ENCODE measurements at regions of chr12 and their contacts with region 1.

Region 1: DNA sequence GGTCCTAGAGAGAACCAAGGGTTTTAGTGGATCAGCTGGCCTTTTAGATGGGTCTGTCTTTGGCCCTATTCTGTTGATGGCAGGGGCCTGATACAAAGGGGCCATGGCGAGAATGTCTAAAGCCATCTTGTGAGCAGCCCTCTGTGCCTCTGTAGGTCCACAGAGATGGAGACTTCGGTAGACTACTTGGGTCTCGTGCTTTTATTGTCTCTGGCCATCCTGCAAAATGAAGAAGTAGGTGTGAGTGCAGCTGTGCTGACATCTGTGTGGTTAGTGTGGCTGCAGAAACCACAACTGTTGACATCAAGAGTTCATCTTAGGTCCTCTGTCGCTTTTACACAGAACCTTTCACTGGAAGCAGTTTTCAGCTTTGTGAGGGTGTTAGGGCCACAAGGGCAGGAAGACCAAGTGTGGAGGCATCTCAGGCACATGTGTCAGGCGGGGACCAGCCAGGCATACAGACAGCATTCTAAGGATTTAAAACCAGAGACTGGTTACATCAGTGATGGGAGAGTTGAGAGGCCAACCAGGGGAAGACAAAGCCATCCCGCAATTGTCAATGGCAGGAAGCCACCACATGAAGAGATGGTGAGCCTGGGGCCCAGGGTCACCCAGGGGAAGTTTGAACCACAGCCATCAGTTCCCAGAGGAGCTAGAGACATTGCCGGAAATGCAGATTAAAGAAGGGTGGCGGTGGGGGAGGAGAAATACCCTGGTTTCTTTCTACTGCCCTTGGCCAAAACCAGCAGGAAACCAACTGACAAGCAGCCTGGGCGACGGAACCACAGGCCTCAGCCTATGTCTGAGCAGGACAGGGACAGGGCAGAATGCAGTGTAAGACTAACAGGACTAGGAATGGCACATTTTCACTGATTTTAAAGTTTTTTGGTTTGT is 13.0 kb upstream of the TPCN1 start:
- DNase-seq: peak; percentile 84
- H3K4me3 Mint-ChIP-seq: peak overlapping the region; percentile 41
- H3K27ac Mint-ChIP-seq: peak overlapping the region; percentile 90
- H3K4me1 Mint-ChIP-seq: peaks cover 61% of the 10 kb centered on the region
- H3K27me3 Mint-ChIP-seq: no peaks in the 10 kb centered on the region

Region 2: GRCh38 chr12:113135178-113136127 is 72.8 kb before region 1 on chr12 and contains the start of gene RASAL1:
- CTCF ChIA-PET with region 1: no interaction called
- POLR2A ChIA-PET with region 1: no interaction called
- DNase-seq: peak; percentile 66
- H3K4me3 Mint-ChIP-seq: peak within 1 kb of the TSS; percentile 54
- H3K27ac Mint-ChIP-seq: no peak within 1 kb of the TSS
- H3K4me1 Mint-ChIP-seq: peaks cover 14% of the 10 kb centered on the region
- H3K27me3 Mint-ChIP-seq: peaks cover 6% of the 10 kb centered on the region
- total RNA-seq, gene RASAL1: 0.10 to 0.35 TPM

Region 3: GRCh38 chr12:113145720-113146551 is 62.4 kb before region 1 on chr12:
- CTCF ChIA-PET with region 1: no interaction called
- POLR2A ChIA-PET with region 1: no interaction called
- DNase-seq: no peak
- H3K4me3 Mint-ChIP-seq: no peak overlapping the region
- H3K27ac Mint-ChIP-seq: no peak overlapping the region
- H3K4me1 Mint-ChIP-seq: no peaks in the 10 kb centered on the region
- H3K27me3 Mint-ChIP-seq: peaks cover 18% of the 10 kb centered on the region

Region 4: GRCh38 chr12:113184900-113185773 is 23.2 kb before region 1 on chr12 and contains the starts of genes DDX54 and RITA1:
- CTCF ChIA-PET with region 1: interaction called, 3 read pairs
- POLR2A ChIA-PET with region 1: interaction called, 36 read pairs
- DNase-seq: peak; percentile 91
- H3K4me3 Mint-ChIP-seq: peak within 1 kb of the TSS; percentile 86
- H3K27ac Mint-ChIP-seq: peak within 1 kb of the TSS; percentile 97
- H3K4me1 Mint-ChIP-seq: peaks cover 26% of the 10 kb centered on the region
- H3K27me3 Mint-ChIP-seq: no peaks in the 10 kb centered on the region
- total RNA-seq, gene DDX54: 55.6 to 57.6 TPM
- total RNA-seq, gene RITA1: 14.7 to 16.9 TPM

Region 5: GRCh38 chr12:113221181-113221997 is 13.1 kb after region 1 on chr12 and contains the start of gene TPCN1:
- CTCF ChIA-PET with region 1: interaction called, 6 read pairs
- POLR2A ChIA-PET with region 1: interaction called, 38 read pairs
- DNase-seq: peak; percentile 99
- H3K4me3 Mint-ChIP-seq: peak within 1 kb of the TSS; percentile 79
- H3K27ac Mint-ChIP-seq: peak within 1 kb of the TSS; percentile 81
- H3K4me1 Mint-ChIP-seq: peaks cover 34% of the 10 kb centered on the region
- H3K27me3 Mint-ChIP-seq: no peaks in the 10 kb centered on the region
- total RNA-seq, gene TPCN1: 18.3 to 19.2 TPM

Region 6: DNA sequence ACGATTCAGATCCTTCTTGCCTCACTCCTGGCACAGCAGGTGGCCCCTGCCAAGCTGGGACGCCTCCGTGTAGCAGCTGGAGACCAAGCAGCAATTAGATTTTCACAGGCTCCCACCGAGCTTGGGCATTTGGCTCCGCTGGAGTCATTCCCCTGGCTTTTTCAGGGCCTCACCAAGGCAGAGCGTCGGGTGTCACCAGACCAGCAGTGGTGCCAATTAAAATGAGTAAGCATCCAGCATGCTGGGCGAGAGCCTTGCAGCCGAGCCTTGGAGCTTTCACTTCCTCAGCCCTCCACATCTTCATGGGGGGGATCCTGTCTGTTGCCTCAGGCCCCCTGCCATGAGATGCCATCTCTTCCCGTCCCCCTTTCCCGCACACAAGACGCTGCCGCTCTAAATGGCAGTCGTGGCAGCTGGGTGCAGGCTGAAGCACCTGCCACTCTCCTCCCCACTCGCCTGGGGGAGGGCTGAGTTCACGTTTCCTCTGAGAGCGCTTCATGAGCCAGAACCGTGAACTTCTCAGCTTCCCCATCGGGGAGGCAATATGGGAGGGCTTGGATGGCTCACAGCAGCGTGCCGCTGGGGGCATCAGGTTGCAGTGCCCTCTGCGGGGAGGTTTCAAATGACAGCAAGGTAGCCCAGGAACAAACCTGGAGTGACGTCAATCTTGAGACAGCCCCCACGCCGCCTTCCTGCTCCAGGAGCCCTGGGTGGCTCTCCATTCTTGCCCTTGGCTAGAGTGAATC is 24.7 kb after region 1 on chr12:
- CTCF ChIA-PET with region 1: interaction called, 3 read pairs
- POLR2A ChIA-PET with region 1: interaction called, 11 read pairs
- DNase-seq: peak; percentile 54
- H3K4me3 Mint-ChIP-seq: peak overlapping the region; percentile 45
- H3K27ac Mint-ChIP-seq: peak overlapping the region; percentile 42
- H3K4me1 Mint-ChIP-seq: peaks cover 42% of the 10 kb centered on the region
- H3K27me3 Mint-ChIP-seq: no peaks in the 10 kb centered on the region

Region 7: GRCh38 chr12:113261847-113262470 is 53.7 kb after region 1 on chr12:
- CTCF ChIA-PET with region 1: no interaction called
- POLR2A ChIA-PET with region 1: interaction called, 14 read pairs
- DNase-seq: peak; percentile 47
- H3K4me3 Mint-ChIP-seq: peak overlapping the region; percentile 14
- H3K27ac Mint-ChIP-seq: peak overlapping the region; percentile 62
- H3K4me1 Mint-ChIP-seq: peaks cover 36% of the 10 kb centered on the region
- H3K27me3 Mint-ChIP-seq: no peaks in the 10 kb centered on the region

Measured in activated CD4-positive, alpha-beta memory T cell treated with anti-CD3 and anti-CD28 coated beads, Interleukin-2, amount 10 ng/mL, durations not matched to agents 7 days and 5 days (primary cell).